AG04450 (cell line): ENCODE measurements at regions of chr1 and their contacts with region 1.

Region 1: GRCh38 chr1:145891587-145892485 is 6.2 kb upstream of the ANKRD35 start:
- DNase-seq: peak; percentile 98
- H3K4me3 ChIP-seq: peak overlapping the region; percentile 33
- H3K27ac ChIP-seq: peak overlapping the region; percentile 99
- H3K27me3 ChIP-seq: no peaks in the 10 kb centered on the region
- CTCF ChIP-seq: peak; percentile 93

Region 2: DNA sequence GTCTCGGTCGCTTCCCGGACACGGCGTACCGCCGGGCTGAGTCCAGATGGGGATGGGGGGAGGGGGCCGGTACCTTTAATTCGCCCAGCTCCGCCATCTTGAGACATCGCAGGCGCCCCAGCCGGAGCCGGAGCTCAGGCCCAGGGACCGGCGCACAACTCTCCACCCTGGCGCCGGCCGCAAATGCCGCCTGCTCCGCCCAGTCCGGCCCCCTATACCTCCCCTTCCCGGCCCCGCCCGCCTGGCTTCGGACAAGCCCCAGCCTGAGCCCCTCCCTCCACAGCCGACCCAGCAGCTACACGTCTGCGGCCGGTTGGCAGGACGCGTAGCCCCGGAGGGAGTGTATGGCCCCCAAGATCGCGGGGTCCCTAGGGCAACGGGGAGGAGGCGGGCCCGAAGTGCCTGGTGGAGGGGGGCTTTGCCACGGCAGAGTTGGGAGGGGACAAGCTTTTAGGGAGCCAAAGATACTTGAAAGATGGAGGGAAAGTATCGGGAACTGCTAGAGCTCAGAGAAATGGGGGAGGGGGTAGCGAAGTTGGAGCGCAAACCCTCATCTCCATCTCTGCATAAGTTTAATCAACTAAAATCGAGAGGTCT is 32.8 kb before region 1 on chr1 and contains the start of gene PIAS3:
- CTCF ChIA-PET with region 1: interaction called, 40 read pairs
- POLR2A ChIA-PET with region 1: interaction called, 25 read pairs
- DNase-seq: peak; percentile 88
- H3K4me3 ChIP-seq: peak within 1 kb of the TSS; percentile 95
- H3K27ac ChIP-seq: peak within 1 kb of the TSS; percentile 70
- H3K27me3 ChIP-seq: no peaks in the 10 kb centered on the region
- CTCF ChIP-seq: no peak
- polyA plus RNA-seq, gene PIAS3: 29.2 and 40.1 TPM in 2 replicates

Region 3: DNA sequence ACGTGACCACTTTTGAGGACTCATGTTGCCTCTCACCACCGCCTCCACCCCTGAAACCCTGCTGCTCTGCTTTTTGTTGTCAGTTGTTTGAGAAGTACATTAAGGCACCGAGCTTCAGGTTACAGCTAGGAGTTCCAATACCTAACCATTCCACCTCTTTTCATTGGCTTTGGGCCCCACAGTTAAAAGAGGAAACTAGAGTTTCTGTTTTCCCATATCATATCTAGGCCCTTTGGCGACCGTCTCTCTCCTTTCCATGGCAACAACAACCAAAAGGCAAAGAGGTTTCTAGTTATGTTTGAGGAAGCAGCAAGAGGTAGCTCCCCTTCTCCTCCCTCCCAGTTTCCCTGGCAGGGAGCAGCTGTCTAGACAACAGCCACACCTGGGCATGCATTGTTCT is 12.1 kb before region 1 on chr1:
- CTCF ChIA-PET with region 1: interaction called, 57 read pairs
- POLR2A ChIA-PET with region 1: interaction called, 4 read pairs
- DNase-seq: no peak
- H3K4me3 ChIP-seq: no peak overlapping the region
- H3K27ac ChIP-seq: no peak overlapping the region
- H3K27me3 ChIP-seq: peaks cover 8% of the 10 kb centered on the region
- CTCF ChIP-seq: no peak

Region 4: GRCh38 chr1:145918144-145918992 is 26.5 kb after region 1 on chr1 and contains the start of gene PEX11B:
- CTCF ChIA-PET with region 1: interaction called, 27 read pairs
- POLR2A ChIA-PET with region 1: interaction called, 15 read pairs
- DNase-seq: peak; percentile 65
- H3K4me3 ChIP-seq: peak within 1 kb of the TSS; percentile 95
- H3K27ac ChIP-seq: peak within 1 kb of the TSS; percentile 84
- H3K27me3 ChIP-seq: no peaks in the 10 kb centered on the region
- CTCF ChIP-seq: no peak
- polyA plus RNA-seq, gene PEX11B: 44.2 and 51.1 TPM in 2 replicates

Region 5: DNA sequence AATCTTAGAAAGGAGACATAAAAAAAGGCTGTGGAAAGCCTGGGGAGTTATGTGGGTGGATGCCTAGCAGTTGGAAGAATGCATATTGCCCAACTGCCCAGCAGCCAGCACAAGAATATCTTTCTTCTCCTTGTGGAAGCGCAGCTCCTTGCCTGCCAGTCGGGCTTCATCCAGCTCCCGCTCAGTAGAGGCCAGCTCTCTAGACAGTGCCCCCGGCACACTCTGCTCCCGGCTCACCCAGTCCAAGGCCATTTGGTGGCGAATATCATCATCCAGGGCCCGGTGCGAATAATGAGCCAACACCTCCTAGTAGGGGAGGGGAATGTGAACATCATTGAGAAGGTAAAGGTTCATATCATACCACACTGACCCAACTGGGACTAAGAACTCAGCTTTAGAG is 44.4 kb after region 1 on chr1:
- CTCF ChIA-PET with region 1: no interaction called
- POLR2A ChIA-PET with region 1: no interaction called
- DNase-seq: no peak
- H3K4me3 ChIP-seq: no peak overlapping the region
- H3K27ac ChIP-seq: no peak overlapping the region
- H3K27me3 ChIP-seq: no peaks in the 10 kb centered on the region
- CTCF ChIP-seq: no peak

Region 6: DNA sequence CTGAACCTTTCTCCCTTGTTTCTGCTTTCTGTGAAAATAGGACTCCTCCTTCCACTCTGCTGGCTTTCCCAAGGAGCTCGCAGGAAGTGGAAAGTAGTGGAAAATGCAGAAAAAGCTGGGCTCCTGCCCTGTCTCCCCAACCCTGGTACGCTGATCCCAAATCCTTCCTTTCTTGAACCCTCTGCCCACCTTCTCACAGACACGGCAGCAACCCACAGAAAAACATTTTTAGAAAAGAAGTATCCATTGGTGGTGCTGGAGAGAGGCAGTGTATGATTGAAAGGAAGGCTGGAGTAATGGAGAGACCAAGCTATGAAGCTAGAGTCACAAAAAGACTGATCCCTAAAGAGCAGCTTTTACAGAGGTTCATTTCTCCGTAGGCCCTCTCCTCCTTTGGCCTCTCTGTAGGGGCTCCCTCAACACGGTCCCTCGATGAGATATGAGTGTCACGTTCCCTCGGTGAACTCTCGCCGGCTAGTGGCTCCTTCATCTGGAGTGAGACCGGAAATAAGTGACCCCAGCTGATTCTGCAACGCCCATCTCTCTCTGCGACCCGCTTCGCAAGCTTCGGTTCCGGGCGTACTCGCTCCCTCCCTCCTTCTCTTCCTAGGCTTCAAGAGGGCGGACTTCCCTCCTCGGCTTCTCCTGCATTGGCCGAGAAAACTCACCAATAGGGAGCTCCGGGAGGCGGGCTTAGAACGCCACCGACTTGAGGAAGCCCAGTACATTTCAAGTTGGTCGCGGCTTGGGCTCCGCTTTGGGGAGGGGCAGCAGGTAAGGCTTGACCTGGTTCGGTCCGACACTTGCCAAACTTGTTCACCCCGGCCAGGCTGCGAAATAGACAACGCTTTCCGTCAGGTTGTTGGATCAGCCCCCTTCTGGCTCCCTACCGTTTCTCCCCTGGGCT is 72.4 kb after region 1 on chr1 and contains the starts of genes ANKRD34A and POLR3GL:
- CTCF ChIA-PET with region 1: interaction called, 8 read pairs
- POLR2A ChIA-PET with region 1: interaction called, 10 read pairs
- DNase-seq: peak; percentile 72
- H3K4me3 ChIP-seq: peak within 1 kb of the TSS; percentile 79
- H3K27ac ChIP-seq: peak within 1 kb of the TSS; percentile 89
- H3K27me3 ChIP-seq: no peaks in the 10 kb centered on the region
- CTCF ChIP-seq: peak; percentile 15; the same call in 1 of the 2 replicates
- polyA plus RNA-seq, gene ANKRD34A: 0.83 and 1.2 TPM in 2 replicates
- polyA plus RNA-seq, gene POLR3GL: 23.1 and 25.0 TPM in 2 replicates

Region 7: DNA sequence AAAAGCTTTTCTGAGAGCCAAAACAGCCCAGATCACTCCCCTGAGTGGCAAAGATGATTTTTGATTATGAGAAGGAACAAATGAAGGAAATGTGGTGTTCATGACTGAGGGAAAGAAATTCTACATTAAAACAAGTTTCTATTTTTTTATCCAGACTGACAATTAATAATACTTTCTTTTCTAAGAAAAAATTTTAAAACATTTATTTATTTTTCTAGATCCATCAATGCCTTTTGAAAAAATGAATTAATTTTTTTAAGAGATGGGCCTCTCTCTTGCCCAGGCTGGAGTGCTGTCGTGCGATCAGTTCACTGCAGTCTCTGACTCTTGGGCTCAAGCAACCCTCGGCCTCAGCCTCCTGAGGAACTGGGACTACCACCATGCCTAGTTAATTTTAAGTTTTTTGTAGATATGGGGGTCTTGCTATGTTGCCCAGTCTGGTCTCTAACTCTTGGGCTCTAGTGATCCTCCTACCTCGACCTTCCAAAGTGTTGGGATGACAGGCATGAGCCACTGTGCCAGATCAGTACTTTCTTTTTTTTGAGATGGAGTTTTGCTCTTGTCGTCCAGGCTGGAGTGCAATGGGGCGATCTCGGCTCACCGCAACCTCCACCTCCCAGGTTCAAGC is 115.8 kb after region 1 on chr1:
- CTCF ChIA-PET with region 1: interaction called, 24 read pairs
- POLR2A ChIA-PET with region 1: interaction called, 3 read pairs
- DNase-seq: no peak
- H3K4me3 ChIP-seq: no peak overlapping the region
- H3K27ac ChIP-seq: no peak overlapping the region
- H3K27me3 ChIP-seq: no peaks in the 10 kb centered on the region
- CTCF ChIP-seq: no peak

Region 8: DNA sequence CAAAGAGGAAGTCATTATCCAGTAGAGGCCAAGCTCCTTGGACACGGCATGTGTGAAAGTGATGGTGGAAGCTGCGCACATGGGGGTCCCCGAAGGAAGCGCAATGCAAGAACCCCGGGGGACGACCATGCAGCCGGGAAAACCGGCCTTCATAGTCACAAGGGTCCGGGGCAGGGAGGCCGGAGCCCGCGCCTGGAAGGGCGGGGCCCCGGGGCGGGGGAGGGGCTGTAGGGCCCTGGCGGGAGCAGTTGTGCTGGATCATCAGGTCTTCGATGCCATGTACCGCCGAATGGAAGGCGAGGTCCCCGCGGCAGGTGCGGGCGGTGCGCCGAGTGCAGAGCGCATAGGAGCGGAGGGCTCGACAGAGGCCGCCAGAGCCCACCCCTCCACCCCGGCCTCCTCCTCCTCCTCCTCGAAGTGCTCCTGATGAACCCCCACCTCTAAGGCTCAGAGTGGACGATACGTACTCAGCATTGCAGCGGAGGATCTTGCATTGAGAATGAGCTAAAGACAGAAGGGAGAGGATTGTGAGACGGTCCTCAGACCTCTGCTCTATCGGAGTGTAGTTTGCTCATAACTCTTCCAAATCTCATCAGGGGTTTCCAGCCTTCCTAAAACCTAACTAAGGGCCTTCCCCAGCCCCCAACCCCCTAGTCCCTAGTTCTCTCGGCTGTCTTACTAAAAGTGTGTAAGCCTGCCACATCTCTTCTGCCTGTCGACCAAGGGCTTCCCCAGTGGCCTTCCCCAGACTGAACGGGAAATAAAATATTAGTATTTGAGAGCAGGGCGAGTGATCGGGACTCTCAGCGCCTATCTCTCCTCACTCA is 127.6 kb after region 1 on chr1:
- CTCF ChIA-PET with region 1: interaction called, 16 read pairs
- POLR2A ChIA-PET with region 1: no interaction called
- DNase-seq: no peak
- H3K4me3 ChIP-seq: no peak overlapping the region
- H3K27ac ChIP-seq: no peak overlapping the region
- H3K27me3 ChIP-seq: peaks cover 36% of the 10 kb centered on the region
- CTCF ChIP-seq: no peak